T-cell (primary cell): ENCODE measurements at regions of chr4 and their contacts with region 1.

Region 1: DNA sequence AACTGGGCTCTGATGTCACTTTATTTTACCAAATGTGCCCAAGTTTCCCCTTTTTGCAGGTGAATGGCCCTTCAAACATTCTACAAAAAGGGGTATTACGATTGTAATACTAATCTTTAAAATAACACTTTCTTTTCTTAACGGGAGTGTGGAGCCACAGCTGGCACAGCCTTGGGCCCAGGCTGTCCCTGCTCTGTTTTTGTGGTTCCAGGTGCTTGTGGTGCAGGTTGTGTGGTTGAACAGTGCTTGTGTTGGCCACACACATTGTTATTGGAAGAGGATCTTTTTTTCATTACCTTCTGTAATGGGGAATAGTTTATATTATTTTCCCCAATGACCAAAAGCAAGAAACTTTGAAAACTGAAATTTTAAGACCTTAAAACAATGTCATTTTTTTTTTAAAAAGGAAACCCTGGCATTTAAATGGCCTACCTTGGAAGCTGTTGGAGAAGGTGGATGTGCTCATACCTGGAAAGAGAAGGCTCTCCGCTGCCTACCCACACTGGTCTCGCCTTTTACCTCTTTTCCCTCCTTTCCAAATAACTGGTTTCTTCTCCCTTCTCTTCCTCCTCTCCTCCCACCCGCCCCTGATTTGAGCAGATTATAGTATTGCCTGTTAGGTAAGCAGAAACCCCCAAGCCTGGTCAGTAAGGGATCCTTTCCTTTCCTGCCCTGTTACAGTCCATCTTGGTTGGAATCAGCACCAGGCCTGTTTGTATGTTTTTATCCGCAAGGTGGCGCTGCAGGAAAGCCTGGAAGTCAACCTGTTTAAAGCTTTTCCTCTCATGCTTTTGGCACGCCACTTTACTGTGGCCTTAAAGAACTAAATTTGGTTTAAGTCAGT is 28.6 kb downstream of the HADH start:
- DNase-seq: peak; percentile 53 to 89 (median 77)
- ATAC-seq: peak; percentile 69 to 86 (median 76)
- H3K4me3 ChIP-seq: no peak overlapping the region
- H3K4me3 Mint-ChIP-seq: no peak overlapping the region
- H3K27ac ChIP-seq: no peak overlapping the region
- H3K27ac Mint-ChIP-seq: no peak overlapping the region
- H3K4me1 ChIP-seq: peaks cover 0 to 2% of the 10 kb centered on the region in 2 experiments
- H3K4me1 Mint-ChIP-seq: peaks cover 12 to 21% (median 13%) of the 10 kb centered on the region in 3 donors
- H3K27me3 ChIP-seq: no peaks in the 10 kb centered on the region
- H3K27me3 Mint-ChIP-seq: no peaks in the 10 kb centered on the region

Region 2: GRCh38 chr4:107870916-107871786 is 147.1 kb before region 1 on chr4:
- CTCF ChIA-PET with region 1: no interaction called
- POLR2A ChIA-PET with region 1: no interaction called
- DNase-seq: no peak
- ATAC-seq: no peak
- H3K4me3 ChIP-seq: no peak overlapping the region
- H3K4me3 Mint-ChIP-seq: no peak overlapping the region
- H3K27ac ChIP-seq: no peak overlapping the region
- H3K27ac Mint-ChIP-seq: no peak overlapping the region
- H3K4me1 ChIP-seq: no peaks in the 10 kb centered on the region
- H3K4me1 Mint-ChIP-seq: no peaks in the 10 kb centered on the region
- H3K27me3 ChIP-seq: no peaks in the 10 kb centered on the region
- H3K27me3 Mint-ChIP-seq: peaks cover 5 to 7% of the 10 kb centered on the region in 2 donors

Region 3: GRCh38 chr4:108030332-108030731 is 12.1 kb after region 1 on chr4:
- CTCF ChIA-PET with region 1: interaction called, 3 to 15 read pairs
- POLR2A ChIA-PET with region 1: interaction called in 1 of 2 experiments, 3 read pairs
- DNase-seq: peak; percentile 45 to 85 (median 67)
- ATAC-seq: peak; percentile 81 to 91 (median 82)
- H3K4me3 ChIP-seq: no peak overlapping the region
- H3K4me3 Mint-ChIP-seq: peak overlapping the region; percentile 21 to 69 (median 46)
- H3K27ac ChIP-seq: peak overlapping the region; percentile 52
- H3K27ac Mint-ChIP-seq: peak overlapping the region; percentile 87 to 94
- H3K4me1 ChIP-seq: peaks cover 40% of the 10 kb centered on the region in 2 experiments
- H3K4me1 Mint-ChIP-seq: peaks cover 52 to 63% (median 58%) of the 10 kb centered on the region in 3 donors
- H3K27me3 ChIP-seq: no peaks in the 10 kb centered on the region
- H3K27me3 Mint-ChIP-seq: no peaks in the 10 kb centered on the region

Region 4: GRCh38 chr4:108560616-108561015 is 542.4 kb after region 1 on chr4:
- CTCF ChIA-PET with region 1: interaction called, 7 to 10 read pairs
- POLR2A ChIA-PET with region 1: interaction called in 1 of 2 experiments, 3 read pairs
- DNase-seq: no peak
- ATAC-seq: no peak
- H3K4me3 ChIP-seq: no peak overlapping the region
- H3K4me3 Mint-ChIP-seq: no peak overlapping the region
- H3K27ac ChIP-seq: no peak overlapping the region
- H3K27ac Mint-ChIP-seq: no peak overlapping the region
- H3K4me1 ChIP-seq: no peaks in the 10 kb centered on the region
- H3K4me1 Mint-ChIP-seq: peaks cover 4 to 24% (median 8%) of the 10 kb centered on the region in 3 donors
- H3K27me3 ChIP-seq: peaks cover 0 to 7% of the 10 kb centered on the region in 2 experiments
- H3K27me3 Mint-ChIP-seq: no peaks in the 10 kb centered on the region

Region 5: DNA sequence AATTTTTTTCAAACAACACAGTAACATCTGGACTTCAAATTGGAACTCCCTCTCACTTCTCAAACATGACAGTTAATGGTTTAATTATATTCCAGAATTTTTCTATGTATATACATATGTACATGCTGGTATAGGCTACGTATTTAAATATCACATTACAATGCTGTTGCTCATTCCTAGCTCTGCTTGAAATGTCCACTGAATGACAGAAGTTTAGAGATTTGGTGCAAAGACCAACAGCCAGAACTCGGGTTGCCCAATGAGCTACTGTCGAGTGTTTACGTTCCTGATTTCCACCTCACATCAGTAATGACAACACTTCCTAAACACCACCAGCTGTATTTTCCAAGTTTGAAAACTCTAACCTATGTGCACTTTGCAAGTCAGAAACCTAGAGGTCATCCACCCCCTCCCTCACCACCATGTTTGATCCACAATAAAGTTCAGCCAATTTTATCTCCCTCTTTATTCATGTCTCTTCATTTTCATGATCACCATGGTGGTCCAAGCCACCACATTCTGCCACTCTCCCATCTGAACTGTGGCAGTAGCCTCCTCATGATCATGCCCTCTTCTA is 552.8 kb after region 1 on chr4:
- CTCF ChIA-PET with region 1: interaction called, 11 to 82 read pairs
- POLR2A ChIA-PET with region 1: no interaction called
- DNase-seq: no peak
- ATAC-seq: no peak
- H3K4me3 ChIP-seq: no peak overlapping the region
- H3K4me3 Mint-ChIP-seq: no peak overlapping the region
- H3K27ac ChIP-seq: no peak overlapping the region
- H3K27ac Mint-ChIP-seq: no peak overlapping the region
- H3K4me1 ChIP-seq: peaks cover 4 to 6% of the 10 kb centered on the region in 2 experiments
- H3K4me1 Mint-ChIP-seq: peaks cover 19 to 30% (median 28%) of the 10 kb centered on the region in 3 donors
- H3K27me3 ChIP-seq: peaks cover 0 to 6% of the 10 kb centered on the region in 2 experiments
- H3K27me3 Mint-ChIP-seq: no peaks in the 10 kb centered on the region

Region 6: DNA sequence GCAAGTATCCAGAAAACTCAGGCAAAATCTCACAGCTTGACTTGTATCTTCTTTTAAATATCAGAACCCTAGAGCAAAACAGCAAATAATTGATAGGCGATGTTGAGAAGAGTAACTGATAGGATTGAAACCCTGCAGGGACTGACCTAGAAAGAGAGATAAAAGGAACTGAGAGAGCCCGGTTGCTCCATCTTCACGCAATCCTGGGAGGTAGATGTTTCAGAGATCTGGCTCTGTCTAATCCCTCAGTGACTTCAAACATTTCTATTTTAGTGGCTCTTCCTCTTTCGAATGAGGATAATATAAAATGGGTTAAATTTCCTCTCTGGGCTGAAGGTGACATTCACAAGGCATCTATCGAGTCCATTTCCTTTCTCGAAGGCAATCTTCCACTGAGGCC is 562.8 kb after region 1 on chr4:
- CTCF ChIA-PET with region 1: interaction called, 3 to 22 read pairs
- POLR2A ChIA-PET with region 1: interaction called in 1 of 2 experiments, 3 read pairs
- DNase-seq: no peak
- ATAC-seq: no peak
- H3K4me3 ChIP-seq: no peak overlapping the region
- H3K4me3 Mint-ChIP-seq: no peak overlapping the region
- H3K27ac ChIP-seq: no peak overlapping the region
- H3K27ac Mint-ChIP-seq: no peak overlapping the region
- H3K4me1 ChIP-seq: peaks cover 0 to 3% of the 10 kb centered on the region in 2 experiments
- H3K4me1 Mint-ChIP-seq: peaks cover 0 to 6% (median 5%) of the 10 kb centered on the region in 3 donors
- H3K27me3 ChIP-seq: no peaks in the 10 kb centered on the region
- H3K27me3 Mint-ChIP-seq: no peaks in the 10 kb centered on the region

Region 7: GRCh38 chr4:109164011-109164410 is 1145.7 kb after region 1 on chr4:
- CTCF ChIA-PET with region 1: no interaction called
- POLR2A ChIA-PET with region 1: no interaction called
- DNase-seq: no peak
- ATAC-seq: no peak
- H3K4me3 ChIP-seq: no peak overlapping the region
- H3K4me3 Mint-ChIP-seq: no peak overlapping the region
- H3K27ac ChIP-seq: no peak overlapping the region
- H3K27ac Mint-ChIP-seq: no peak overlapping the region
- H3K4me1 ChIP-seq: no peaks in the 10 kb centered on the region
- H3K4me1 Mint-ChIP-seq: no peaks in the 10 kb centered on the region
- H3K27me3 ChIP-seq: peaks cover 0 to 3% of the 10 kb centered on the region in 2 experiments
- H3K27me3 Mint-ChIP-seq: peaks cover 7% of the 10 kb centered on the region in 2 donors

Region 8: DNA sequence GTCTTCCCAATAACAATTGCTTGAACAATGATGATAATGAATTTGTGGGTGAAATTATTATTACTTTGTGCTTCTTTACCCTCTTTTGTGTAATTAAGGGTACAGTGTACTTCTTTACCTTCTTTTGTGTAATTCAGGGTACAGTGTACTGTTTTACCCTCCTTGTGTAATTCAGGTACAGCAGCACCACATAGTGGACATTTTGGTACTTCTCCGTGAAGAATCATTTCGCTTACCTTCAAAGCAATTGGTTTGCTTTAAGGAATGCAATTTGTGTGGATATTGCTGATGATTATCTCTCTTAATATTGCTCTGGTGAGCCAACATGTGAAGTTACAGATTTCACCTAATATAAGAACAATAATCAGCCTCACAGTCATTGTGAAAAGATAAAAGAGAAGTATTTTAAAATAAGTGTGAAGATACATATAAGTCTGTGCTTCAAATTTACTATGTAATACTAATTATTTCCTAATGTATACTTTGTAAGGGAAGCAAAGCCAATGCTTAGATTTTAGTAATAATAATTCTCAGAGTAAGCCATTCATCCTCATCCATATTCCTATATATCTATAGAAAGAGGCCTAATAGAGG is 1388.2 kb after region 1 on chr4:
- CTCF ChIA-PET with region 1: interaction called in 1 of 2 experiments, 13 read pairs
- POLR2A ChIA-PET with region 1: no interaction called
- DNase-seq: peak in 17 of 35 experiments; percentile 9 to 73 (median 22)
- ATAC-seq: peak; percentile 37 to 79 (median 64)
- H3K4me3 ChIP-seq: no peak overlapping the region
- H3K4me3 Mint-ChIP-seq: no peak overlapping the region
- H3K27ac ChIP-seq: no peak overlapping the region
- H3K27ac Mint-ChIP-seq: no peak overlapping the region
- H3K4me1 ChIP-seq: no peaks in the 10 kb centered on the region
- H3K4me1 Mint-ChIP-seq: peaks cover 0 to 5% (median 0%) of the 10 kb centered on the region in 3 donors
- H3K27me3 ChIP-seq: no peaks in the 10 kb centered on the region
- H3K27me3 Mint-ChIP-seq: peaks cover 3 to 7% of the 10 kb centered on the region in 2 donors